CD4-positive, alpha-beta T cell (primary cell): ENCODE measurements at regions of chr4 and their contacts with region 1.

Region 1: DNA sequence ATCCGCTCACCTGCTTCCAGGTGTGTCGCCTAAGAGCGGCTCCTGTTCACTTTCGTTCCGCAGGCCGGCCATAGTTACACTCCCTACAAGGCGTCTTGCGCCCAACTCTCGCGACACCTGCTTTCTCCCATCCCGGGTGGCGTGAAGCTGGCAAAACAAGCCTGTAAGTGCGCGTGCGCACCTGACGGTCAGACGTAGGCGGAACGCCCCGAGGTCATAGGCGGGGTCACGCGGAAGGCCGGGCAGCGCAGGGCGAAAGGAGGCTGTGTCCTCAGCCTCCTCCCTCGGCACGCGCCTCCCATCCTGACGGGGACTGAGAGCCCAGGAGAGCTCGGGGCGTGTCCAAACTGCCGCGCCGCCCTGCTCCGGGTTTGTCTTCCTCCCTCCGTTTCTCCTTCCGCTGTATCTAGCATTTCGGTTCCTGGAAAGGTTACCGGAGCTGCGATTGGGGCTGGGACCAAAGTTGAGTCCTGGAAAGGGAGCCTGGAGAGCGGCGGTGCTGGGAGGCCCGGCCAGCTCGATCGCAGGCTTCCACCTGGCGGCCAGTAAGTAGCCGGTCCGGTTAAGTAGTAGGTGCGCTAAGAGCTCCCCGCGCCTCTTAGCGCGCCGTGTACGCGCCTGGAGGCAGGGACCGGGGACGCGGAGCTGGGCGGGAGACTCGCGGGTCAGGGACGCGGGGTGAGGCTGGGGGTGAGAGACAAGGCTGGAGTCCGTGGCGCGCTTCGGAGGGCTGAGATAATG is at the starts of genes ABHD18 and MFSD8:
- DNase-seq: peak; percentile 97 to 100 (median 99)
- ATAC-seq: peak; percentile 86
- H3K4me3 ChIP-seq: peak within 1 kb of the TSS; percentile 82
- H3K4me3 Mint-ChIP-seq: peak within 1 kb of the TSS; percentile 97
- H3K27ac ChIP-seq: peak within 1 kb of the TSS; percentile 92 to 93
- H3K27ac Mint-ChIP-seq: peak within 1 kb of the TSS; percentile 95
- H3K4me1 ChIP-seq: peaks cover 31% of the 10 kb centered on the region
- H3K4me1 Mint-ChIP-seq: peaks cover 59% of the 10 kb centered on the region
- H3K27me3 ChIP-seq: no peaks in the 10 kb centered on the region
- H3K27me3 Mint-ChIP-seq: no peaks in the 10 kb centered on the region
- CTCF ChIP-seq: no peak
- total RNA-seq, gene ABHD18: 15.1 to 17.0 TPM
- total RNA-seq, gene MFSD8: 25.0 to 28.0 TPM

Region 2: GRCh38 chr4:127880764-127881562 is 84.3 kb before region 1 on chr4 and contains the start of gene PLK4:
- CTCF ChIA-PET with region 1: no interaction called
- POLR2A ChIA-PET with region 1: interaction called, 40 read pairs
- intact Hi-C with region 1: loop called (anchors 1 to 2 kb)
- DNase-seq: peak; percentile 86 to 97 (median 92)
- ATAC-seq: peak; percentile 89
- H3K4me3 ChIP-seq: peak within 1 kb of the TSS; percentile 80
- H3K4me3 Mint-ChIP-seq: peak within 1 kb of the TSS; percentile 95
- H3K27ac ChIP-seq: peak within 1 kb of the TSS; percentile 73 to 76
- H3K27ac Mint-ChIP-seq: peak within 1 kb of the TSS; percentile 99
- H3K4me1 ChIP-seq: peaks cover 11% of the 10 kb centered on the region
- H3K4me1 Mint-ChIP-seq: peaks cover 29% of the 10 kb centered on the region
- H3K27me3 ChIP-seq: no peaks in the 10 kb centered on the region
- H3K27me3 Mint-ChIP-seq: no peaks in the 10 kb centered on the region
- CTCF ChIP-seq: no peak
- total RNA-seq, gene PLK4: 2.7 to 3.4 TPM

Region 3: GRCh38 chr4:127889903-127890302 is 75.3 kb before region 1 on chr4:
- CTCF ChIA-PET with region 1: no interaction called
- POLR2A ChIA-PET with region 1: interaction called, 12 read pairs
- intact Hi-C with region 1: no loop called
- DNase-seq: no peak
- ATAC-seq: no peak
- H3K4me3 ChIP-seq: no peak overlapping the region
- H3K4me3 Mint-ChIP-seq: no peak overlapping the region
- H3K27ac ChIP-seq: no peak overlapping the region
- H3K27ac Mint-ChIP-seq: no peak overlapping the region
- H3K4me1 ChIP-seq: no peaks in the 10 kb centered on the region
- H3K4me1 Mint-ChIP-seq: no peaks in the 10 kb centered on the region
- H3K27me3 ChIP-seq: no peaks in the 10 kb centered on the region
- H3K27me3 Mint-ChIP-seq: no peaks in the 10 kb centered on the region
- CTCF ChIP-seq: no peak

Region 4: DNA sequence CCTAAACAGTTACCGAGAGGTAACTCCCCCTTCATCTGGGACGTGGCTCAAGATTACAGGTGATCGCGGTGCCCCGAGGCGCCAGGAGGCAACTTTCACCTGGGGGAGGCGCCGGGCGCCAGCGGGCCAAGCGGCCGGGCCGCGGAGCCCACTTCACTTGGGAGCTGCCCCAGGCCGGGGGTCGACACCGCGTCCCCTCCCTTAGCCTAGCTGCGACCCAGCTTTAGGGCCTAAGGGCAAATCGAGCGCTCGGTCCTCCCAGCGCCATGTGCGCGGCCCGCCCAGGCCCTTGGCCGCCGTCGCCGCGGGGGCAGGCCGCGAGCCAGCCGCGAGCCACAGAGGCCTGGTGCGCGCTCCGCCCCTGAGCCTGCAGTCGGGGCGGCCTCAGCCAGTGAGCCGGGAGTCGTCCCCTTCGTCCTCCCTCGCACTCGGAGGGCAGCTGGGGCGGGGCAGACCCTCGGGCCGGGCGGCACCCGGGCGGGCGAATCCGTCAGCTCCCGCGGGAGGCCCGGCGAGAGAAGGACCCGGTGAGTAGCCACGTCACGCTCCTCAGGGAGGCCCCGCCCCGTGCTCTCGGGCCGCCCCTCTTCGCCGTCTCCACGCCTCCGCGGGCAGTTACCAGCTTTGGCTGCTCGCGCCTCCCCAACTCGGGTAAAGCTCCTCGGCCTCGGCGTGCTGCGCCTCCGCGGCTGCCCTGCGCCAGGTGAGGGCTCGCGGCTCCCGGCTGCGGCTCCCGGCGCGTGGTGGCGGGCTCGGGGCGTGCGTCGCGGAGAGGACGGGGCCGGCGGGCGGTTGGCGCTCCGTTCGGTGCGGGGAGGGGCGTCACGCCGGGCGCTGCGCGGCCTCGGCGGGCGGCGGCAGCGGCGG is 95.7 kb after region 1 on chr4 and contains the start of gene LARP1B:
- CTCF ChIA-PET with region 1: interaction called, 6 read pairs
- POLR2A ChIA-PET with region 1: interaction called, 129 read pairs
- intact Hi-C with region 1: loop called (anchors 2 to 5 kb)
- DNase-seq: peak; percentile 81 to 96 (median 90)
- ATAC-seq: peak; percentile 89
- H3K4me3 ChIP-seq: peak within 1 kb of the TSS; percentile 64
- H3K4me3 Mint-ChIP-seq: peak within 1 kb of the TSS; percentile 93
- H3K27ac ChIP-seq: peak within 1 kb of the TSS; percentile 60 to 70
- H3K27ac Mint-ChIP-seq: peak within 1 kb of the TSS; percentile 89
- H3K4me1 ChIP-seq: peaks cover 23% of the 10 kb centered on the region
- H3K4me1 Mint-ChIP-seq: peaks cover 6% of the 10 kb centered on the region
- H3K27me3 ChIP-seq: no peaks in the 10 kb centered on the region
- H3K27me3 Mint-ChIP-seq: no peaks in the 10 kb centered on the region
- CTCF ChIP-seq: no peak
- total RNA-seq, gene LARP1B: 8.4 to 8.9 TPM

Region 5: DNA sequence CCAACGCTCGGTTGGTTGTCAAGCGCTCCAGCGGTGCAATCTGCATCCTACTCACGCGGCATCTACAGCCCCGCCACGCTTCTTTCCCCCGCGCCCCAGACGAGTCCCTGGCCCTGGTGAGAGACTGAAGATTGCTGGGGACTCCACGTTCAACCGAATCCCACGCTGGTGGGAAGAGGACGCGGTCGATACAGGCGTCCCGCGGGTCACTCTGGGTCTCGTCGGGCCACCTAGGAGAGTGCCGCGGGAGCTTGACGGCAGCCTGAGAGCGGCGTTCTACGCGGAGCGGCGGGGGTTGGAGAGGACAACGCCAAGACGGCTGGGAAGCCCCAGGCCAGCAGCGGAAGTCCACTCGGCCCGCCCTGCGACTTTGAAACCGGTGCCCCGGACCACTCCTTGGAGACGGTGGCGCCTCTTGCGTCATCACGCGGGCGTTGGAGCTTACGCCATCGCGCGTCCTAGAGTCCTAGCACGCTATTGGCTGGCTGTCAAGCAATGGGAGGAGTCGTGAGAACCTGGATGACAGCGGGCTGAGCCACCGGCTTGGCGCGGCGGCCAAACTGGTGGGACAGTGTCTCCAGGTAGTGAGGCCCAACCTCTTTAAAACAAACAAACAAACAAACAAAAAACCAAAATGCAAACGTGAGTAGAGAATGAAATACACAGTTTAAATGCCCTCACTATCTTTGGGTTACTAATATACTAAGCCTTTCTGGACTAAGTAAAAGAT is 1128.1 kb after region 1 on chr4 and contains the start of gene SCLT1:
- CTCF ChIA-PET with region 1: no interaction called
- POLR2A ChIA-PET with region 1: interaction called, 24 read pairs
- intact Hi-C with region 1: loop called (anchors 5 kb)
- DNase-seq: peak; percentile 87 to 98 (median 93)
- ATAC-seq: peak; percentile 90
- H3K4me3 ChIP-seq: peak within 1 kb of the TSS; percentile 88
- H3K4me3 Mint-ChIP-seq: no peak within 1 kb of the TSS
- H3K27ac ChIP-seq: peak within 1 kb of the TSS; percentile 92 to 97
- H3K27ac Mint-ChIP-seq: no peak within 1 kb of the TSS
- H3K4me1 ChIP-seq: peaks cover 16% of the 10 kb centered on the region
- H3K4me1 Mint-ChIP-seq: peaks cover 45% of the 10 kb centered on the region
- H3K27me3 ChIP-seq: no peaks in the 10 kb centered on the region
- H3K27me3 Mint-ChIP-seq: no peaks in the 10 kb centered on the region
- CTCF ChIP-seq: no peak
- total RNA-seq, gene SCLT1: 21.8 to 21.9 TPM